Ascending aorta (tissue), 2 donors: ENCODE measurements at regions of chr11 and their contacts with region 1.

Region 1: DNA sequence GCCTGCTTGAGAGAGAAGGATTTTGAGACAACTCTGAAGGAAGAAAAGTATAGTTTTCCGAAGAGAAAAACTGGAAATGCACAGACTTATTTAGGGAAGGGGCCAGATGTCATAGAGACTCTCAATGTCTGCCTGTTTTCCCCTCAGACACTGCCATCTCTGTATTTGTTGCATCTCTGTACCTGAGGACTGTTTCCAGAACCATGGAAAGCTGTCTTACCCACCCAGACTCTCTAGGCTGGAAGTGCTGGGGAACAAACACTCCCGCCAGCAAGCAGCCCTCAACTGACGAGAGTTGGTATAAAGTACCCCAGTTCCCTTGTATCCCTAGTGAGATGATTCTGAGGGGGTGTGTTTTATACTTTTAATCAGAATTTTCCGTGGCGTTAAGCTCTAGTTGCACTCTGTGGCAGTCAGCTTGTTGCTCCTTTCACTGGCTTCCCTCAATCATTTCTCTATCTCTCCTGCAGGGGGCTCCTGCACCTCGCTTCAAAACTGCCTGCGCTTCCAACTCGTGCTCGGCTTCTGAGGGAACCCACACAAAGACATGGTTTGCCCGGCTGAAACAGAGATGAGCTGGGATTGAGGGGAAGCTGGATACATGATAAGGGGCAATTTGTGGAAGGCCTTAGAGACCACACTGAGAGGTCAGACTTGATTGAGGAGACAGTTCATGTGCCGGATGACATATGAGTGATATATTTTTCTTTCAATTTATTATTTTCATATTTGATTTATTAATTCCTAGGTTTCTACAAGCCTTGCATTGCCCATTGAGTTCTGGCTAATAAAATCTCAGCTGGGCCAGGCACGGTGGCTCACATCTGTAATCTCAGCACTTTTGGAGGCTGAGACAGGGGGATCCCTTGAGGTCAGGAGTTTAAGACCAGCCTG is 36.9 kb upstream of the CLPB start:
- DNase-seq: peak in 1 of 2 donors; percentile 78
- H3K4me3 ChIP-seq: no peak overlapping the region
- H3K27ac ChIP-seq: no peak overlapping the region
- H3K4me1 ChIP-seq: no peaks in the 10 kb centered on the region
- H3K27me3 ChIP-seq: no peaks in the 10 kb centered on the region
- CTCF ChIP-seq: peak; percentile 77 to 84 (median 77)

Region 2: DNA sequence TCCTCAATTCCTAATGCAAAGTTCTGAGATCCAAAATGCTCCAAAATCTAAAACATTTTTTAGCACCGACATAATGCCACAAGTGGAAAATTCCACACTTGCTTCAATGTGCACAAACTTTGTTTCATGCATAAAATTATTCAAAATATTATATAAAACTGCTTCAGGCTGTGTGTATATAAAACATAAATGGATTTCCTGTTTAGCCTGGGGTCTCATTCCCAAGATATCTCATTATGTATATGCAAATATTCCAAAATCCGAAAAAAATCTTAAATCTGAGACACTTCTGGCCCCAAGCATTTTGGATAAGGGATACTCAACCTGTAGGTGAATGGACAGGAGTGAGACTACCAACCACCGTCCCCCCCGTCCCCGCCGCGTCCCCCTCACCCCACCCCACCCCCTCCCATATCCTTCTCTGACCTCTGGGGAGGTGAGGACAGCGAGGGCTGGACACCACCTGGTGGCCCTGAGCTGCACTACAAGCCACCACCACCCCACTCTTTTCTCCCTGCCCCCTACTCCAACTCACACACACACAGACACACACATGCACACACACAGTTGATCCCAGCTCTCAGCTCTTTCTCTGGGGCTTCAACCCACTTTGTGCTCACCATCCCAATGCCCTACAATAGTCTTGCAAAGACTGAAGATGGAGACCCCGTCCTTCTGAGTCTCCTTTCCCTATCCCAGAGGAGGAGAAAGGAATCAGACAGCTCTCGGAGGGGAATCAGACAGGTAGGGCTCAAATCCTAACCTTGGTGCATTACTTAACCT is 102.0 kb after region 1 on chr11:
- intact Hi-C with region 1: loop called (anchors 2 kb)
- DNase-seq: no peak
- H3K4me3 ChIP-seq: no peak overlapping the region
- H3K27ac ChIP-seq: no peak overlapping the region
- H3K4me1 ChIP-seq: no peaks in the 10 kb centered on the region
- H3K27me3 ChIP-seq: no peaks in the 10 kb centered on the region
- CTCF ChIP-seq: peak in 2 of 3 experiments; percentile 14 to 60

Region 3: DNA sequence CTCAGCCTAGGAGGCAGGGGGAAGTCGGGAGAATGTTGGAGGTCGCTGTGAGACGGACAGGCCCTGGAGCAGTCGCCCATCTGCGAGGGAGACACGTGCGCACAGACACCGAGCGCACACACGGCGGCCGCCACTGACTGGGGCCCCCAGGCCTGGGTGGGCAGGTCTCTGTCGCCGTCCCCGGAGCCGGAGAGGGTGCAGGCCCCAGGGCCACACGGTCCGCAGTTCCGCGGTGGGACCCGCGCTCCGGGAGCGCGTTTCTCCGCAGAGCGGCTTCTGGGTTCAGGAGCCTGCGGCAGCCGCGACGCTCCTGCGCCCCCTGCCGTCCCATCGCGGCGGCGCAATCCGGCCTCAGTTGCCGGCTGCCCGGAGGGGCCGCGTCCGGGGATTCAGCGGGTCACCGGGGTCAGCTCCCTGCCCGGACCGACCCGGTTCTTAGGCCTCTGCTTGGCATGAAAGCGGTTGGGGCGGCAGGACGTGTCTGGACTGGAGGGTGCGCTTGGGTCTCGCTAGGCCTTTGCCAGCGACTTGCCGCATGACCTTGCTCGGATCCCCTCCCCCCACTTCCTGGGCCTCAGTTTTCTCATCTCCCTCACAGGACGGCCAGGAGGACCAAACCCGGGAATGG is 171.7 kb after region 1 on chr11:
- intact Hi-C with region 1: loop called (anchors 5 kb)
- DNase-seq: peak in 1 of 2 donors; percentile 74
- H3K4me3 ChIP-seq: peak overlapping the region; percentile 62 to 75
- H3K27ac ChIP-seq: peak overlapping the region in 1 of 2 donors; percentile 35
- H3K4me1 ChIP-seq: peaks cover 3 to 5% of the 10 kb centered on the region in 2 donors
- H3K27me3 ChIP-seq: peaks cover 9% of the 10 kb centered on the region
- CTCF ChIP-seq: peak; percentile 94 to 99 (median 96)

Region 4: GRCh38 chr11:72683782-72684200 is 212.5 kb after region 1 on chr11:
- intact Hi-C with region 1: loop called (anchors 5 kb)
- DNase-seq: peak in 1 of 2 donors; percentile 85
- H3K4me3 ChIP-seq: no peak overlapping the region
- H3K27ac ChIP-seq: no peak overlapping the region
- H3K4me1 ChIP-seq: no peaks in the 10 kb centered on the region
- H3K27me3 ChIP-seq: no peaks in the 10 kb centered on the region
- CTCF ChIP-seq: peak; percentile 89 to 98 (median 97)